A673 (cell line): ENCODE measurements at regions of chr2 and their contacts with region 1.

Region 1: GRCh38 chr2:39124000-39124745 is 3.3 kb upstream of the SOS1 start:
- DNase-seq: peak; percentile 99
- H3K4me3 ChIP-seq: peak overlapping the region; percentile 68
- H3K27ac ChIP-seq: peak overlapping the region; percentile 92
- H3K4me1 ChIP-seq: peaks cover 7% of the 10 kb centered on the region
- H3K27me3 ChIP-seq: no peaks in the 10 kb centered on the region
- CTCF ChIP-seq: peak; percentile 57

Region 2: GRCh38 chr2:39227628-39228412 is 103.6 kb after region 1 on chr2:
- CTCF ChIA-PET with region 1: interaction called, 4 read pairs
- POLR2A ChIA-PET with region 1: no interaction called
- intact Hi-C with region 1: loop called (anchors 2 kb)
- DNase-seq: peak; percentile 77
- H3K4me3 ChIP-seq: peak overlapping the region; percentile 27
- H3K27ac ChIP-seq: no peak overlapping the region
- H3K4me1 ChIP-seq: no peaks in the 10 kb centered on the region
- H3K27me3 ChIP-seq: no peaks in the 10 kb centered on the region
- CTCF ChIP-seq: peak; percentile 92

Region 3: GRCh38 chr2:39241588-39241987 is 117.4 kb after region 1 on chr2:
- CTCF ChIA-PET with region 1: no interaction called
- POLR2A ChIA-PET with region 1: no interaction called
- intact Hi-C with region 1: no loop called
- DNase-seq: no peak
- H3K4me3 ChIP-seq: no peak overlapping the region
- H3K27ac ChIP-seq: no peak overlapping the region
- H3K4me1 ChIP-seq: no peaks in the 10 kb centered on the region
- H3K27me3 ChIP-seq: no peaks in the 10 kb centered on the region
- CTCF ChIP-seq: no peak